Activated B cell treated with CpG ODN at 0.5 μM for 24 hours (primary cell): ENCODE measurements at regions of chr17 and their contacts with region 1.

Region 1: DNA sequence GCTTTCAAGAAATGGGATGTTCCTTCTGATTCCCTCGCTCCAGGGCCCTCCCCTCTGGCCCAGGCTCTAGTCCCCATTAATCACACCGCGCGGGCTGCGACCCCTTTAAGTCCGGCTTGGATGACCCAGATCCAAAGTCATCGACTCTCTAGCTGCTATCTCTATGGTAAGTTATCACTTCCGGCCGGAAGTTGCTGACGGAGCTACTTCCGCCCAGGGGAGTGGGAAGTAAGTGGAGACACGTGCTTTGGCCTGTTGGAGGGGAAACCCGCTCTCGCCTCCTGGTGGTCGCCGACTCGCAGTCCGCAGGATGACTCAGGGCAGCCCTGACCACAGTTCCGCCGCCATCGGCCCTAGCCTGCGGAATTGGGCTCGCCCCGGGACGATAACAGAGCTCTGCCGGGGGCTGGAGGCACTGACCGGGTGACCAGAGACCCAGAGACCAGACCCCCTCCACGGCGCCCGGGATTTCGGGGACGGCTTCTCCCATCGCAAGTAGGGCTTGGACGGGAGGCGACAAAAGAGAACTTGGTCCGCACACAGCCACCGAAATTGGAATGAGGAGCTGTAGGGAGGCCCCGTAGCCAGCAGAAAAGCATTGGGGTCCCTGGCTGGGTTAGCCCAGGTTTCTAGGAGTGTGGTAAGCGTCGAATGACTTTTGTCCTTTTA is 52.2 kb upstream of the SEC14L1 start:
- DNase-seq: peak; percentile 84
- ATAC-seq: peak; percentile 89
- H3K4me3 Mint-ChIP-seq: peak overlapping the region; percentile 95
- H3K27ac Mint-ChIP-seq: peak overlapping the region; percentile 95
- H3K4me1 Mint-ChIP-seq: peaks cover 52% of the 10 kb centered on the region
- H3K27me3 Mint-ChIP-seq: peaks cover 3% of the 10 kb centered on the region
- CTCF ChIP-seq: no peak

Region 2: GRCh38 chr17:76726231-76726775 is 362.3 kb before region 1 on chr17 and contains the start of gene JMJD6:
- CTCF ChIA-PET with region 1: no interaction called
- POLR2A ChIA-PET with region 1: no interaction called
- intact Hi-C with region 1: no loop called
- DNase-seq: peak; percentile 83
- ATAC-seq: peak; percentile 75
- H3K4me3 Mint-ChIP-seq: peak within 1 kb of the TSS; percentile 96
- H3K27ac Mint-ChIP-seq: peak within 1 kb of the TSS; percentile 95
- H3K4me1 Mint-ChIP-seq: peaks cover 48% of the 10 kb centered on the region
- H3K27me3 Mint-ChIP-seq: no peaks in the 10 kb centered on the region
- CTCF ChIP-seq: no peak
- total RNA-seq, gene JMJD6: 32.7 and 33.1 TPM in 2 replicates

Region 3: DNA sequence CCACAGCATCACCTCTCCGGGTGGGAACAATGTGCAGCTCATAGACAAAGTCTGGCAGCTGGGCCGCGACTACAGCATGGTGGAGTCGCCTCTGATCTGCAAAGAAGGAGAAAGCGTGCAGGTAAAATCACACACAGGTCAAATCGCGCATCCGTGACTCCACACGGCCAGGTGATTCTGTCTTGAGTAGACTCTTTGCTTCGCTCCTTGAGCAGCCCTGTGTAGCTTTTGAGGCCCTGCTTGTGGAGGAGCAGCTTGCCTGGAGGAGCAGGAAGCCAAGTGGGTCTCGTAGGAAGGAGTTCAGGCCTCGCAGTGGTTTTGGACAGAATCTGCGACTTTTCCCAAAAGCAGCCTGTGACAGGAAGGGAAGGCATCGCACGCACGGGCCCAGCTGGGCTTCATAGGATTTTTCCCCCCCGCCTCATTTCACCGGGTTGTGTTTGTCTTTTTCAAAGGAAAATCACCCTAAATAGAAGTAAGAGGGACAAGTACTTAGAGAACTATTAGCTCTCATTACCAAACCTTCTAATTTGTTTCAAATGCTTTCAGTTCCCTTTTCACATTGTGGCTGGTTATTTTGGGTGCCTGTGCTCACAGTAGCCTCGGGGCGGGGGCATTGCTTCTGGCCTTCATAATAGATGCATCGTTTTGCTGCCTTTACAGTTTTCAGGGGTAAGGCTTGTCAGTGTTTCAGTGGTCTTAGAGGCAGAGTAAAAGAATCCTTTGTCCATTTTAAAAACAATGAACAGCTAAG is 123.7 kb after region 1 on chr17:
- CTCF ChIA-PET with region 1: interaction called, 6 read pairs
- POLR2A ChIA-PET with region 1: interaction called, 12 read pairs
- intact Hi-C with region 1: no loop called
- DNase-seq: peak; percentile 36
- ATAC-seq: peak; percentile 93
- H3K4me3 Mint-ChIP-seq: peak overlapping the region; percentile 70
- H3K27ac Mint-ChIP-seq: peak overlapping the region; percentile 80
- H3K4me1 Mint-ChIP-seq: peaks cover 49% of the 10 kb centered on the region
- H3K27me3 Mint-ChIP-seq: no peaks in the 10 kb centered on the region
- CTCF ChIP-seq: no peak

Region 4: DNA sequence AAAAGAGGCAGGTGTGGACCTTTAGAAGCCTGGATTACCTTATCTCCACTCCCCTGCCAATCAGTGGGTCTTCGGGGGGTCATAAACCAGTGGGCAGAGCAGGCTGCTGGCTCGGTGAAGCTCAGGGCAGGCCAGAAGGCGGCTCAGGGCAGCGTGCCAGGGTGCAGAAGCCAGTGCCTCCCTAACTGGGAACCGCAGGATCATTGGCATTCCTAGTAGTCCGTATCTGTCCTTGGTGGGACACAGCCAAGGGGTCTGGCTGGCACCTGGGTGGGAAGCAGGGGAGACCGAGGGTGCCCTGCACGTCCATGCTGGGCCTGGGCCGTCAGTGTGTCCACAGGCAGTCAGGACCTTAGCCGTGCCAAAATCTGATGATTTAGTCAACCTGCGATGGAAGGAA is 129.0 kb after region 1 on chr17:
- CTCF ChIA-PET with region 1: interaction called, 6 read pairs
- POLR2A ChIA-PET with region 1: interaction called, 12 read pairs
- intact Hi-C with region 1: no loop called
- DNase-seq: no peak
- ATAC-seq: no peak
- H3K4me3 Mint-ChIP-seq: no peak overlapping the region
- H3K27ac Mint-ChIP-seq: no peak overlapping the region
- H3K4me1 Mint-ChIP-seq: peaks cover 21% of the 10 kb centered on the region
- H3K27me3 Mint-ChIP-seq: no peaks in the 10 kb centered on the region
- CTCF ChIP-seq: no peak